ENCODE measurements at regions of chr6 and their contacts with region 1.

Region 1: GRCh38 chr6:2744209-2744771 is 6.4 kb downstream of the MYLK4 start:
- DNase-seq: no peak
- H3K4me3 ChIP-seq: no peak overlapping the region
- H3K27ac ChIP-seq: no peak overlapping the region
- H3K4me1 ChIP-seq: peaks cover 0 to 5% of the 10 kb centered on the region in 2 donors
- H3K27me3 ChIP-seq: no peaks in the 10 kb centered on the region
- CTCF ChIP-seq: peak in 1 of 3 donors; percentile 10
- POLR2A ChIP-seq: no peak

Region 2: DNA sequence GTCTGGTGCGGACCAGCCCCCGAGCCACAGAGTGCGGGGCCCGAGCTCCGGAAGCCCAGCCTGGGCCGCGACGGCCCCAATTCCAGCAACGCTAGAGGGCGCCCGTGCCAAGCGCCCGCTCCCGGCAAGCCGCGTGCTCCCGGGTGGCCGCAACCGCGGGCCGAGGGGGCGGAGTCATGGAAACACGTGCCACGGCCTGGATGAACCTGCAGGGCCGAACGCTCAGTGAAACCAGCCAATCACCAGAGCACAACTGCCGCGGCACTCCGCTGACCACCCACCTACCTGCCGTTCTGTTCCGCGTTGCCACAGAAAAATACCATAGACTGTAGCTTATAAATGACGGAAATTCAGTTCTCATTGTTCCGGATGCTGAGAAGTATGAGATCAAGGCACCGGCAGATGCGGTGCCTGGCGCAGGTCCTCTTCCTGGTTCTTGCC is 1220.2 kb before region 1 on chr6:
- intact Hi-C with region 1: loop called (anchors 5 kb)
- DNase-seq: peak; percentile 56 to 73
- H3K4me3 ChIP-seq: peak overlapping the region in 2 of 3 donors; percentile 29 to 54
- H3K27ac ChIP-seq: peak overlapping the region; percentile 12 to 29
- H3K4me1 ChIP-seq: peaks cover 2 to 10% of the 10 kb centered on the region in 2 donors
- H3K27me3 ChIP-seq: no peaks in the 10 kb centered on the region
- CTCF ChIP-seq: peak in 2 of 3 donors; percentile 55 to 58
- POLR2A ChIP-seq: no peak

Region 3: DNA sequence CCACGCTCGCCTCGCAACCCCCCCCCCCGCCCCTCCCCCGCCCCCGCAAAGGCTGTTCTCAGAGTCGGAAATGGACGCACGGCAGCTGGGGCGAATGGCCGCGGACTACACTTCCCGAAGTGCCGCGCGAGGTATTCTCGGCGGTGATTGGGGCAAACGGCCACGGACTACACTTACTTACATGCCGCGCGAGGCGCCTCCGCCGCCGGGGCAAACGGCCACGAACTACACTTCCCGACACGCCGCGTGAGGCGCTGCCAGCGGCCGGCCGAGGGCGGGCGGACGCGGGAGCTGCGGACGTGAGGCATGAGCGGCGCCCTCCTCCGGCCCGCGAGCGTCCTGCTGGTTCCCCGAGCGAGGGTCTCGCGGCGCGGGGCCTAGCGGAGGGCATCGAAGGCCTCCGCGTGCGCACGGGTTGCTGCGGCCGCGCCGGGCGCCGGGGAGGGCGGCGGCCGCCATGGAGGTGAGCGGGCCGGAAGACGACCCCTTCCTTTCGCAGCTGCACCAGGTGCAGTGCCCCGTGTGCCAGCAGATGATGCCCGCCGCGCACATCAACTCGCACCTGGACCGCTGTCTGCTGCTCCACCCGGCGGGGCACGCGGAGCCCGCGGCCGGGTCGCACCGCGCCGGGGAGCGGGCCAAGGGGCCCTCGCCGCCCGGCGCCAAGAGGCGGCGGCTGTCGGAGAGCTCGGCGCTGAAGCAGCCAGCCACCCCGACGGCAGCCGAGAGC is 21.0 kb after region 1 on chr6 and contains the start of gene WRNIP1:
- intact Hi-C with region 1: no loop called
- DNase-seq: peak; percentile 98 to 99
- H3K4me3 ChIP-seq: peak within 1 kb of the TSS; percentile 77 to 94 (median 94)
- H3K27ac ChIP-seq: peak within 1 kb of the TSS; percentile 83 to 96
- H3K4me1 ChIP-seq: peaks cover 0 to 19% of the 10 kb centered on the region in 2 donors
- H3K27me3 ChIP-seq: no peaks in the 10 kb centered on the region
- CTCF ChIP-seq: peak in 2 of 3 donors; percentile 27 to 82
- POLR2A ChIP-seq: no peak
- total RNA-seq, gene WRNIP1: 40.6 to 62.3 (median 59.3) TPM